ENCODE measurements at regions of chr10 and their contacts with region 1.

Region 1: GRCh38 chr10:63521416-63522276 is 445 bp downstream of the REEP3 start:
- DNase-seq: peak; percentile 31 to 67 (median 61)
- H3K4me3 ChIP-seq: peak overlapping the region; percentile 94
- H3K4me3 Mint-ChIP-seq: peak overlapping the region; percentile 80 to 94 (median 86)
- H3K27ac ChIP-seq: peak overlapping the region; percentile 87
- H3K27ac Mint-ChIP-seq: peak overlapping the region; percentile 74 to 95 (median 86)
- H3K4me1 ChIP-seq: peaks cover 37% of the 10 kb centered on the region
- H3K4me1 Mint-ChIP-seq: peaks cover 60 to 76% (median 68%) of the 10 kb centered on the region in 3 donors
- H3K27me3 ChIP-seq: no peaks in the 10 kb centered on the region
- H3K27me3 Mint-ChIP-seq: no peaks in the 10 kb centered on the region

Region 2: DNA sequence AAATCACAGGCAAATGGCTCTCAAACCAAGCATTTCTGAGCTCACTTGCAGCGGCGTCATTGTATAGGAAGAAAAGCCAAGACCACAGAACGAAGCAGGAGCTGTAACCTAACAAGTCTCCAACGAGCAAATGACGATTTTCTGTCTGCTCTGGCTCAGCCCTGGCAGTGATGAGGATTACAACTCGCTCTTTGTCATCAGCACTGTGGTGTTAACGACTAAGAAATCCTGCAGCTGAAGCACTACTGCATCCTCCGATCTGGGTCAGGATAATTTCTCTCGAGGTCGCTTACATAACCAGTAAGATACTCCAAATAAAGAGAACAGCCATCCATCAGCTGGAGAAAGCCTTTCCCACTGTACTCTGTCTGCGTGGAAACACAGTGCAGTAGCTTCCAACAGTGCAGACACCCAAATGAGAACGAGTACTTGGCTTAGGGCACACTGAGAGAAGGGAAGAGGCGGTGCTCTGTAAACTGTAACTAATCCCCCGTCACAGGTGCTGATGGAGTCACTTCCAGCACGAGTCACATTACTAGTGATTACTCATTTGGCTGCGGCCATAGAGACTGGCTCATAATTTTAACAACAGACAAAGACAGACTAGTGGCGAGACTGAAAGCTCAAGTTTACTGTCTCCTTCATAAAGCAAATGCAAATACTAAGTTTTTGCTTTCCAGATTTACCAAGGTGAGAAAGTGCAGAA is 252.7 kb before region 1 on chr10:
- CTCF ChIA-PET with region 1: interaction called, 4 read pairs
- POLR2A ChIA-PET with region 1: interaction called, 14 read pairs
- DNase-seq: peak; percentile 63 to 90 (median 87)
- H3K4me3 ChIP-seq: peak overlapping the region; percentile 83
- H3K4me3 Mint-ChIP-seq: peak overlapping the region; percentile 93 to 99 (median 98)
- H3K27ac ChIP-seq: peak overlapping the region; percentile 97
- H3K27ac Mint-ChIP-seq: peak overlapping the region; percentile 97 to 100 (median 99)
- H3K4me1 ChIP-seq: peaks cover 29% of the 10 kb centered on the region
- H3K4me1 Mint-ChIP-seq: peaks cover 20 to 34% (median 28%) of the 10 kb centered on the region in 3 donors
- H3K27me3 ChIP-seq: no peaks in the 10 kb centered on the region
- H3K27me3 Mint-ChIP-seq: no peaks in the 10 kb centered on the region